Esophagus muscularis mucosa (tissue), 4 donors: ENCODE measurements at regions of chr11 and their contacts with region 1.

Region 1: DNA sequence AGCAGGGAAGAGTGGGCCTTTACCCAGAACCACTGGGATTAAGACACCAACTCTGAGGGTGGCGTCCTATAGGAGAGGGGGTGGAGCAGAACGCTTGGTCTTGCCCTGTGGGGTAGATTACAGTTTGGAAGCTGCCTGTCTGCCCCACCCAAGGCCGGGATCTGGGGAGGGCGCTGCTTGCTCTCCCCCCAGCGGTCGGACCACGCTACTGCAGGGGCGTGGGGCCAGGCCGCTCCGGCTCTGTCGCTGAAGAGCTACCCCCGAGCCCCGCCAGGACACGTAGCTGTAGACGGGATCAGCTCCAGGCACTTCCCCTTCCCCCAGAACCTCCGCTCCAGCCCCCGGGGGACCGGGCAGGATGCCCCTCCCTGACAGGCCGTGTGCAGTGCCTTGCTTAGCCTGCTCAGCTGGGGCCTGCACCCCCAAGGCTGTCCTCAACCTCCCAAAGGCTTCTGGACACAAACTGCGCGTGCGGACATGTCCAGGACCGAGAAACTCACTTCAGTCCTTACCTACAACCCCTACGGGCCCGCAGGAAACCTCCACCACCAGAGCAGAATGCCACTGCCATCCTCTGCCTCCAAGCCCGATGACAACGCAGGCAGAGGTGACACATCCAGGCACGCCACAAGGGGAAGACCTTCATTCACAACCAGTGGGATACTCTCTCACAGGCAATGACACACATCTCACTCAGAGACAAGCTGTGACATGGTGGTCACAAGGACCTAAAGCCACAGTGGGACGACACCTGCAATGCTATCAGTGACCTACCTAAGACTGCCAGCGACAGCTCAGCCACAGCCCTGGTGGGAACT is 3.6 kb downstream of the AHNAK start:
- DNase-seq: no peak
- H3K4me3 ChIP-seq: peak overlapping the region; percentile 85 to 100 (median 95)
- H3K27ac ChIP-seq: peak overlapping the region; percentile 97 to 100 (median 98)
- H3K4me1 ChIP-seq: peaks cover 57 to 74% (median 68%) of the 10 kb centered on the region in 4 donors
- H3K27me3 ChIP-seq: no peaks in the 10 kb centered on the region
- CTCF ChIP-seq: peak in 2 of 3 experiments; percentile 99 to 100
- EP300 ChIP-seq: no peak
- POLR2A ChIP-seq: peak; percentile 29

Region 2: DNA sequence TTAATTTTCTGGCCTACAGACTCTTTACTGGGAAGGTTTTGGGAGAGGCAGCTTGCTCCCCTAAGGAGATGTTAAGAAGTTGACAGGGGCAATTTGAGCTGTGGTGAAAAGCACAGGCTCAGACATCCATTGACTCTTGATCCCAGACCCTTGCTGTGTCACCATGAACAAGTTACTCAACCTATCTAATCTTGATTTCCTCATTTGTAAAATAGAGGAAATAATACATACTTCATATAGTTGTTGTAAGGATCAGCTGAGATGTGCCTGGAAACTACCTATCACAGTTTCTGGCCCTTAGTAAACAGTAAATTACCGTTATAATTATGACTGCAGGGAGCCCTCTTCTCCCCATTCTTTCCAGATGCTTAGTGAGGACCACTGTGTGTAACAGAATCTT is 227.5 kb before region 1 on chr11:
- intact Hi-C with region 1: no loop called
- DNase-seq: no peak
- H3K4me3 ChIP-seq: no peak overlapping the region
- H3K27ac ChIP-seq: no peak overlapping the region
- H3K4me1 ChIP-seq: peaks cover 0 to 7% (median 2%) of the 10 kb centered on the region in 4 donors
- H3K27me3 ChIP-seq: peaks cover 0 to 26% (median 2%) of the 10 kb centered on the region in 4 donors
- CTCF ChIP-seq: no peak
- EP300 ChIP-seq: no peak
- POLR2A ChIP-seq: no peak

Region 3: DNA sequence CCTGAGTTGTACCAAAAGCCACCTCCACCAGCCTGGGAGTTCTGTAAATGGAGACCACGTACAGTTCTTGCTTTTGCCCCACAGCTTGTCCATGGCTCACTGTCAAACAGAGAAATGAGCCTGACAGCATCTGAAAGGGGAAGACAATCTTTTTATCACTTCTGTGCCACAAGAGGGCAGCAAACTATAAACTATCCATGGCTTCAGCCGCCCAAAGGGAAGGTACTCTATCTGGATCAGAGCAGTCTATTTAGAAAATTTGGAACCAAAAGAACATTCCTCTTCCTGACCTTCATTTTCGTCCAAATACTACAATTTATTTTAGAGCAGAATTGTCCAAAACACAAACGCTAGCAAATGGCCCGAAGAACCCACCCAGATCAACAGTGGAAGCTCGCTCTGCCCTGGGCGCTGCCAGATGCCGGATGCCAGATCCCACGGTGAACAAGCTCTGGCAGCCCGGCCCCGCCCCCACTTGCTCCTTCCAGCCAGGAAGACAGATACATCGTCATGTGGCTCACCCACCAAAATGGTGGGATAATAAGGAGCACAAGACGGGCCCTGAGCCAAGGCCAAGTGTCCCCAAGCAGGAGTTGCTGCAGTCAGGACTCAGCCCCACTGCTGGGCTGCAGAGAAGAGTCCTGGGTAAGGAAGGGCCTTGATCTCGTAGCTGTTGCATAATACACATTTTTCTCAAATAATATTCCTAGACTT is 148.0 kb before region 1 on chr11:
- intact Hi-C with region 1: loop called (anchors 5 kb)
- DNase-seq: no peak
- H3K4me3 ChIP-seq: peak overlapping the region; percentile 45 to 60 (median 48)
- H3K27ac ChIP-seq: peak overlapping the region; percentile 74 to 81 (median 79)
- H3K4me1 ChIP-seq: peaks cover 35 to 57% (median 56%) of the 10 kb centered on the region in 4 donors
- H3K27me3 ChIP-seq: no peaks in the 10 kb centered on the region
- CTCF ChIP-seq: peak; percentile 67 to 75 (median 74)
- EP300 ChIP-seq: no peak
- POLR2A ChIP-seq: no peak

Region 4: DNA sequence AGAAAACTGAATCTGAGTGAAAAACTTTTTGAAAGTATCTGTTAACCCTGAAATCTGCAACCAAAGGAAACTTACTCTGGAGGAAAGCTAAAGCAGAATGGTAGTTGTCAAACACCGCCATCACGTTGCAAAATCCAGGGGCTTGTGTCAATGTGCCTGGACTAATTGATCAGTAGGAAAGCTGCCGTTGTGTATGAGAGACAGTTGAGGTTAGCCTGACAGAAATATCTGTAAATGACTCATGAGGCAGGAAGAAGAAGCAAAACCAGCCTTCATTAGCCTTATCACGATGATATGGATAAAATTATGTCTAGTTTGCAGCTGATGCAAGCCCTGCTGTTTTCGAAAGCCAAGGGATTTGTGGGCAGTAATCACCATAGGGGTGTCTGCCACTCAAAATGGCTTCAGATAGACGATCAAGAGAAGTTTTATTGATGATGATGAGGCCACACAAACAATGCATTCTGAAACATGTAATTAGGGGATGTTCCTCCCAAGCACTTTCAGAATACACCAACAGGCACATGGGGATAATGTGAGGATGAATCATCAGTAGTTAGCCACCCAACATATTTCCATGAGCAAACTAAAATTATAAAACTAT is 115.2 kb before region 1 on chr11:
- intact Hi-C with region 1: loop called (anchors 1 kb)
- DNase-seq: no peak
- H3K4me3 ChIP-seq: no peak overlapping the region
- H3K27ac ChIP-seq: peak overlapping the region in 3 of 4 donors; percentile 11 to 43 (median 27)
- H3K4me1 ChIP-seq: peaks cover 14 to 73% (median 48%) of the 10 kb centered on the region in 4 donors
- H3K27me3 ChIP-seq: no peaks in the 10 kb centered on the region
- CTCF ChIP-seq: no peak
- EP300 ChIP-seq: no peak
- POLR2A ChIP-seq: no peak

Region 5: GRCh38 chr11:62497132-62497915 is 45.6 kb before region 1 on chr11:
- intact Hi-C with region 1: no loop called
- DNase-seq: no peak
- H3K4me3 ChIP-seq: no peak overlapping the region
- H3K27ac ChIP-seq: peak overlapping the region in 1 of 4 donors; percentile 9
- H3K4me1 ChIP-seq: peaks cover 30 to 36% (median 32%) of the 10 kb centered on the region in 4 donors
- H3K27me3 ChIP-seq: no peaks in the 10 kb centered on the region
- CTCF ChIP-seq: peak in 2 of 3 experiments; percentile 8 to 28
- EP300 ChIP-seq: no peak
- POLR2A ChIP-seq: no peak

Region 6: GRCh38 chr11:62508268-62509058 is 34.5 kb before region 1 on chr11:
- intact Hi-C with region 1: loop called (anchors 2 kb)
- DNase-seq: peak; percentile 94
- H3K4me3 ChIP-seq: peak overlapping the region; percentile 29 to 41 (median 31)
- H3K27ac ChIP-seq: peak overlapping the region; percentile 79 to 91 (median 85)
- H3K4me1 ChIP-seq: peaks cover 58 to 89% (median 84%) of the 10 kb centered on the region in 4 donors
- H3K27me3 ChIP-seq: no peaks in the 10 kb centered on the region
- CTCF ChIP-seq: peak; percentile 47 to 68 (median 58)
- EP300 ChIP-seq: peak; percentile 58
- POLR2A ChIP-seq: no peak

Region 7: GRCh38 chr11:62560566-62561103 is 17.7 kb after region 1 on chr11:
- intact Hi-C with region 1: loop called (anchors 2 kb)
- DNase-seq: peak; percentile 97
- H3K4me3 ChIP-seq: peak overlapping the region in 2 of 4 donors; percentile 31 to 36
- H3K27ac ChIP-seq: peak overlapping the region; percentile 88 to 97 (median 94)
- H3K4me1 ChIP-seq: peaks cover 39 to 78% (median 62%) of the 10 kb centered on the region in 4 donors
- H3K27me3 ChIP-seq: no peaks in the 10 kb centered on the region
- CTCF ChIP-seq: peak; percentile 86 to 92 (median 88)
- EP300 ChIP-seq: no peak
- POLR2A ChIP-seq: no peak